H1 (cell line): ENCODE measurements at regions of chr17 and their contacts with region 1.

Region 1: GRCh38 chr17:49407981-49408501 is 6.6 kb downstream of the PHB1 start:
- DNase-seq: peak; percentile 70 to 97
- H3K4me3 ChIP-seq: no peak overlapping the region
- H3K27ac ChIP-seq: no peak overlapping the region
- H3K4me1 ChIP-seq: no peaks in the 10 kb centered on the region
- H3K27me3 ChIP-seq: no peaks in the 10 kb centered on the region
- CTCF ChIP-seq: peak; percentile 95 to 99 (median 99)
- EP300 ChIP-seq: 0 out of 3 replicates have a peak, but pooled peaks of 1 of the 2 experiments have one; percentile 7
- POLR2A ChIP-seq: no peak
- RAD21 ChIP-seq: peak; percentile 95 to 98

Region 2: DNA sequence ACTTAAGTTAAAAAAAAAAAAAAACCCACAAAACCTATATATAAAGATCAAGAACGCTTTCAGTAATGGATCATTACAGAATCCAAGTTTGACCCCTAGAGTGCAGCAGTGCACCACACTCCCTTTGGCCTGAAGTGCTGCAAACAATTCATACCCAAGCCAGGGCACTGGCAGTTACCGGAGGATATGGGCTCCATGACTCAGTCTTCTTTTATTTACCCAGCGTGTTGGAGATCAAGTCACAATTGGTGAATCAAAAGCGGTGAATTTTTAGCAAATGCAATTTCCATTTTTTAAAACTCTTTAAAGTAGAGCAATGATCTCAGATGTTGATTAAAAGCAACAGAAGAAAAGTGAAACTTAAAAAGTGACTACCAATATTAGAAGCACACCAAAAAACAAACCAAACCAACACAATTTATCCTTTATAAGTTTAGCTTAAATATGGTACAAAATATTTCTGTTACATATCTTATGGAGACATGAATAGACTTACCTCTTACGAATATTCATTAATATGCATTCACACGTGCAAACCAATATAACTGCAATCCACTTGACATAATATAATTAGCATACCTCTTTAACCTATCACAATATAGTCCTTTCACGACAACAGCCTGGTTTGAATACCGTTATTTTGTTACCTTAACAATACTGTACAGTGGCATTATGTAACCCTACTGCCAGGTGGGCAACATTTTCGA is 92.3 kb before region 1 on chr17:
- CTCF ChIA-PET with region 1: interaction called, 10 read pairs
- POLR2A ChIA-PET with region 1: no interaction called
- DNase-seq: peak; percentile 31 to 62
- H3K4me3 ChIP-seq: no peak overlapping the region
- H3K27ac ChIP-seq: no peak overlapping the region
- H3K4me1 ChIP-seq: no peaks in the 10 kb centered on the region
- H3K27me3 ChIP-seq: no peaks in the 10 kb centered on the region
- CTCF ChIP-seq: peak; percentile 27 to 83 (median 71)
- EP300 ChIP-seq: no peak
- POLR2A ChIP-seq: no peak
- RAD21 ChIP-seq: peak; percentile 96 to 98

Region 3: GRCh38 chr17:49343273-49343672 is 64.8 kb before region 1 on chr17:
- CTCF ChIA-PET with region 1: no interaction called
- POLR2A ChIA-PET with region 1: no interaction called
- DNase-seq: no peak
- H3K4me3 ChIP-seq: no peak overlapping the region
- H3K27ac ChIP-seq: no peak overlapping the region
- H3K4me1 ChIP-seq: no peaks in the 10 kb centered on the region
- H3K27me3 ChIP-seq: no peaks in the 10 kb centered on the region
- CTCF ChIP-seq: no peak
- EP300 ChIP-seq: no peak
- POLR2A ChIP-seq: no peak
- RAD21 ChIP-seq: no peak

Region 4: DNA sequence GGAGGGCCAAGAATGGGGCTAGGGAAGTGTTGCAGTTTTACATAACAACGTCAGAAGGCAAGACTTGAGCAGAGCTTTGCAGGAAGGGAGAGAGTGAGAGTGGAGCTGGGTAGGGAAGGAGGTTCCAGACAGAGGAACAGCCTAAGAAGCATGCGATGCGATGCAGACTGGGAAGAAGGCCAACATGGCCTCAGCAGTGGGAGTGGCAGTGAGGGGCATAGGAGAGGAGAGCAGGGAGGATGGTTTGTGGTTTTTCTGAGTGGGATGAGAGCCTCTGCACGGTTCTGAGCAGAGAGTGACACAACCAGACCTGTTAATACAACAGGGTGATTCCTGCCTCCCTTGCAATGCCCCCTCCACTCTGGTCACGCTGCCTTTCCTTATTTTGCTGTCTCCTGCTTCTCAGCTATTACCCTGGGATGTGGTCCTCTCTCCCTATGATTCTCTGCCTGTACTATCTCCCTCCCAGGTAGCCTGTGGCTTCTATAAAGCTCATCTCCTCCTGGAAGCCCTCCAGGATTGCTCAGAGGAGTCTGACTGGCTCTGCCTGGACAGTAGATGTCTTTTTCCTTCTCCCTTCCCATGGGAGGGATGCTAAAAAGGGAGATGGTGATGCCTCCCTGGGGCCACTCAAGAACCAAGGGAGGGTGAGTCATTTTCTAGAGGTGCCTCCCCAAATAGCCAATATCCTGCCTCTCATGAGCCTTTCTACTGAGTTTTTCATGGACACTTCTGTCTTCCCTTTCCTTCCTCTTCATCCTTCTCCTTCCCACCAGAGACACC is 48.3 kb after region 1 on chr17:
- CTCF ChIA-PET with region 1: interaction called, 14 read pairs
- POLR2A ChIA-PET with region 1: no interaction called
- DNase-seq: no peak
- H3K4me3 ChIP-seq: no peak overlapping the region
- H3K27ac ChIP-seq: no peak overlapping the region
- H3K4me1 ChIP-seq: peaks cover 0 to 19% (median 3%) of the 10 kb centered on the region in 4 experiments; a peak in 4 of 7 replicates
- H3K27me3 ChIP-seq: peaks cover 0 to 3% (median 0%) of the 10 kb centered on the region in 4 experiments; a peak in 1 of 7 replicates
- CTCF ChIP-seq: no peak
- EP300 ChIP-seq: no peak
- POLR2A ChIP-seq: no peak
- RAD21 ChIP-seq: no peak

Region 5: DNA sequence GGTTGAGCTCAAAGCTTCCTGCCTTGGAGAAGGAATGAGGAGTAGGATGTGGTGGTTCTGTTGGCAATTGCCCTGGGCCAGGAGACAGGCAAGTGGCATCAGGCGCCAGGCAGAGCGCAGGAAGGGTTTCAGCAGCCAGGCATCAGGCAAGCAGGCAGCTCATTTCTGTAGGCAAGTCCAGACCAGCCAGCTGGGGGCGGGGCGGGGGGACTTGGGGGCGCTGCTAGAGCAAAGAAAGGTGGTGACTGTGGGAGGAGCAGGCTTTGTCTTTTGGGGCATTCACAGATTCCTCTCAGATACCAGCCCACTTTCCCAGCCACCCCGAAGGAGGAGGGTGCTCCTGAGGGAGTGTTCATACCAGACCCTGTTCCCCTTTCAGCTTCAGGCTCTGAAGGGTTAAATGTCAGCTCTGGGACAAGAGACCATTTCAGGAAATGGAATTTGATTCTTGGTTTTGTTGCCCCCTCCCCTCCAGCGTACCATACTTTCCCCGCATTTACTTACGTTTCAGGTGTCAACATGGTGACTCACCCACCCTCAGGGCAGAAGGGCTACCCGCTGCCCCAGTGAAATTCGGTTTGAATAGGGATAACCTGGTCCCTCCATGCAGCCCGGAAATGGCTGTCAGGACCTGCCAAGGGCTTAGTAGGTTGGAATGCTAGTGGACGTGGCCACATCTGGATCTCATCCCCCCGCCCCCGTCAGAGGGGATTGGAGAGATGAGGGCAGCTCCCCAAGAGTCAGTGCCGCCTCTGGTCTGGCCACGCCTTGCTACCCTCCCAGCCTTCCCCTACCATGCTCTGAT is 100.2 kb after region 1 on chr17:
- CTCF ChIA-PET with region 1: interaction called, 26 read pairs
- POLR2A ChIA-PET with region 1: interaction called, 4 read pairs
- DNase-seq: peak; percentile 83 to 97
- H3K4me3 ChIP-seq: peak overlapping the region; percentile 22 to 51 (median 34); a peak in 5 of 8 replicates
- H3K27ac ChIP-seq: peak overlapping the region; percentile 58; the same call in 1 of the 2 replicates
- H3K4me1 ChIP-seq: peaks cover 6 to 40% (median 22%) of the 10 kb centered on the region in 4 experiments
- H3K27me3 ChIP-seq: peaks cover 0 to 2% (median 0%) of the 10 kb centered on the region in 4 experiments; a peak in 1 of 7 replicates
- CTCF ChIP-seq: no peak
- EP300 ChIP-seq: no peak
- POLR2A ChIP-seq: peak in 1 of 2 experiments; percentile 48; a peak in 1 of 3 replicates
- RAD21 ChIP-seq: no peak

Region 6: DNA sequence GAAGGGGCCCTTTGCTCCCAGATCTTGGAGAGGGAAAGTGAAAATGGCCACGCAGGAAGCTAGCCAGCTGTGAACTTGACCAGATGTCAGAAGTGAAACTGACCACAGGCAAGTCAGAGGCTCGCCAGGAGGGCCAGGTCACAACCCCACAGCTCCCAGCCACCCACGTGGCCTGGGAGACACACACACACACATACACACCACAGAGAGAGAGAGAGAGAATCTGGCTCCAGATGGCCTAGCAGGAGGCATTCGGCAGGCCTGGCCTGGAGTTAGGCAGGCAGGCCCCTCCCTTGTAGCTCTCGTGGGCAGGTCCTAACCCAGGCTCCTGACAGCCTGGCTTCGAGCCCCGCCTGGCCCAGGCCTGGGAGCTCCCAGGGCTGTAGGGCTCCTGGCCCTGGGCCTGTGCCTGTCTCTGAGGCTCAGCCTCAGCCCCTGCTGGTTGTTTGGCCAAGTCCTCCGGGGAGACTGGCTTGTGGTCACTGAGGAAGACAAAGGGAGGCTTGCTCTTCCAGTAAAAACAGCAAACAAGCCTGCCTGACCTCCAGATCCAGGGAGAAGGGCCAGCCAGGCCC is 107.2 kb after region 1 on chr17:
- CTCF ChIA-PET with region 1: interaction called, 26 read pairs
- POLR2A ChIA-PET with region 1: no interaction called
- DNase-seq: peak in 1 of 2 experiments; percentile 70
- H3K4me3 ChIP-seq: no peak overlapping the region
- H3K27ac ChIP-seq: no peak overlapping the region
- H3K4me1 ChIP-seq: peaks cover 16 to 41% (median 22%) of the 10 kb centered on the region in 4 experiments
- H3K27me3 ChIP-seq: no peaks in the 10 kb centered on the region
- CTCF ChIP-seq: no peak; a peak in 1 of 4 replicates
- EP300 ChIP-seq: no peak
- POLR2A ChIP-seq: no peak; a peak in 1 of 3 replicates
- RAD21 ChIP-seq: peak; percentile 7 to 33; a peak in 3 of 4 replicates

Region 7: DNA sequence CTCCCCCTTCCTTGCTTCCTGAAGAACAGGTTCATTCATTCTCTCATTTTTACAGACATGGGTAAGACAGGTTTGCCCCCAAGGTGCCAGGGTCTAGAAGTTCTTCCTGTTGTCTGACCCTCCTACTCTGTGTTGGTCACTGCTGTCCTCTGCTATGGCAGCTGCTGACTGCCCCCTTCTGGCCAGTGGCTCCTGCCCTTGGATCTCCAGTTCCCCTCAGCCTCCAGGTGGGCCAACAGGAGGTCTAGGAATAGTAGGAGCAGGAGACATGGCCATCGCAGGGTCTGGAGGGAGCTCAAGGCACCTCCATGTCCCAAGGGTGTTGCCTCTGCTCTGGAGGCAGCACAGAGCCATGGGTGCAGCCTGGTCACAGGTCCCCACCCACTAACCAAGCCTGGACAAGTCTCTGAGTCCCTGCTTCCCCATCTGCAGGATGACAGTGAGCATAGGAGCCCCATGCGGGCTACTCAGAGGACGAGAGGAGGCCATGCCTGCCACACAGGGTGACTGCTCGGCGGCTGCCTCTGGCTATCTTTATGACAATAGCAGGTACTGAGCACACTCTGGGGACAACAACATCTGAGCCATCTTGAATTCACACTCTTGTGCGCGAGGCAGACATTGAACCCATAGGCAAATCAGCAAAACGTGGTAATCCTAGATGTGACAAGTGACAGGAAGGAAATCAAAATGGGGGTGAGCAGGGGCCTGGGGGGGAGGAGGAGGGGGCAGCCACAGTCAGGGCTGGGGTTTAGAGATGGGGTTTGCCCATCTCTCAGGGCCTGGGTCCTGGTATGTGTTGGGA is 140.7 kb after region 1 on chr17:
- CTCF ChIA-PET with region 1: interaction called, 30 read pairs
- POLR2A ChIA-PET with region 1: interaction called, 3 read pairs
- DNase-seq: peak in 1 of 2 experiments; percentile 85
- H3K4me3 ChIP-seq: no peak overlapping the region
- H3K27ac ChIP-seq: no peak overlapping the region
- H3K4me1 ChIP-seq: peaks cover 0 to 26% (median 14%) of the 10 kb centered on the region in 4 experiments; a peak in 6 of 7 replicates
- H3K27me3 ChIP-seq: no peaks in the 10 kb centered on the region
- CTCF ChIP-seq: peak; percentile 93 to 96 (median 94)
- EP300 ChIP-seq: no peak
- POLR2A ChIP-seq: no peak
- RAD21 ChIP-seq: peak; percentile 91 to 95

Region 8: GRCh38 chr17:49567871-49568694 is 160.0 kb after region 1 on chr17:
- CTCF ChIA-PET with region 1: interaction called, 12 read pairs
- POLR2A ChIA-PET with region 1: no interaction called
- DNase-seq: peak in 1 of 2 experiments; percentile 96
- H3K4me3 ChIP-seq: peak overlapping the region in 2 of 4 experiments; percentile 11 to 51; a peak in 4 of 8 replicates
- H3K27ac ChIP-seq: no peak overlapping the region
- H3K4me1 ChIP-seq: peaks cover 0 to 9% (median 2%) of the 10 kb centered on the region in 4 experiments; a peak in 3 of 7 replicates
- H3K27me3 ChIP-seq: peaks cover 0 to 5% (median 2%) of the 10 kb centered on the region in 4 experiments; a peak in 4 of 7 replicates
- CTCF ChIP-seq: peak; percentile 87 to 98 (median 90)
- EP300 ChIP-seq: no peak
- POLR2A ChIP-seq: no peak
- RAD21 ChIP-seq: peak; percentile 97 to 99

Region 9: GRCh38 chr17:49634485-49634860 is 226.4 kb after region 1 on chr17:
- CTCF ChIA-PET with region 1: no interaction called
- POLR2A ChIA-PET with region 1: no interaction called
- DNase-seq: no peak
- H3K4me3 ChIP-seq: no peak overlapping the region
- H3K27ac ChIP-seq: no peak overlapping the region
- H3K4me1 ChIP-seq: peaks cover 0 to 5% (median 1%) of the 10 kb centered on the region in 4 experiments; a peak in 2 of 7 replicates
- H3K27me3 ChIP-seq: no peaks in the 10 kb centered on the region
- CTCF ChIP-seq: no peak
- EP300 ChIP-seq: no peak
- POLR2A ChIP-seq: no peak
- RAD21 ChIP-seq: no peak